Right cardiac atrium (tissue), 5 donors: ENCODE measurements at regions of chr5 and their contacts with region 1.

Region 1: DNA sequence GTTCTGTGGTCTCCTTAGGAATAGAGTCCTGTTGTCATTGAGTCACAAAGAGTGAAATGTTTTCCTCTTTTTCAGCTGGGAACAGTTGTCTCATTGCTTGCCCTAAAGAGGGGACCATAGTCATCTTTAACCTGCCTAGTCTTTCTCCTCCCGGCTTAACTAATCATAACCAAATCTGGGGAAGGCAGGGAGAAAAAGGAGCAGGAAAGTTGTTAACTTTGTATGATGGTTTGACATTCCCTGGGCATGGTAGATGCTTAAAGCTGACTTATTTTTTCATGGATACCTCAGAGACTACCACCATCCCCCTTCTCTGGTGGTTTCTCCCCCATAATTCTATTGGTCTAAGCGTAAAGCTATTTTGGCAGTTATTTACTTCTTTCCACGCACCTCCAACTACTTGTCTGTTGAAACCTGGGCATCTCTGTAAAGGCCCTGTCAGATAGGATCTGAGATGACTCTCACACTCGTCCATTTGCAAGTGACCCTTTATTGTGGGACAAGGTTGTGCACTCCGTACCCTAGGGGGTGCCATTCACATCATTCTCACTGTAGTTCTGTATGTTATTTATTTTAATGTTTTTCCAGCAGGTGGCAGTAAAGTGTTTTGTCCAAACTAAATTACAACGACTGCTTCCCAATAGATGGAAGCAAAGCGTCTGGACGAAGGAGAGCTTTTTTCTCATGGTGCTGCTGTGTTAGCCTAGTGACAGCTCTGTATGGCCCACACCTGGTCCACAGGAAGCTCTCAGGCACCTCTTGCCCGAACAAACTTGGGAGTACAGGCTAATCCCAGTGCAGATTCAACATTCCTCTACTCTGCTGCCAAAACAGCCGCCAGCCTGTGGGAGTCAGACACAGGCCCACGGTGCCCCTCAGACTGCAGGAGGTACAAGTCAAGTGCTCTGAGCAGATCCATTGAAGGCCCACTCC is 3.0 kb upstream of the FAM13B start:
- DNase-seq: peak in 2 of 3 donors; percentile 48 to 63
- ATAC-seq: peak; percentile 54
- H3K4me3 ChIP-seq: no peak overlapping the region
- H3K27ac ChIP-seq: no peak overlapping the region
- H3K4me1 ChIP-seq: no peaks in the 10 kb centered on the region
- H3K27me3 ChIP-seq: no peaks in the 10 kb centered on the region

Region 2: GRCh38 chr5:137847687-137848086 is 188.2 kb before region 1 on chr5:
- intact Hi-C with region 1: no loop called
- DNase-seq: no peak
- ATAC-seq: peak; percentile 64 to 89
- H3K4me3 ChIP-seq: no peak overlapping the region
- H3K27ac ChIP-seq: peak overlapping the region; percentile 86
- H3K4me1 ChIP-seq: peaks cover 2% of the 10 kb centered on the region
- H3K27me3 ChIP-seq: no peaks in the 10 kb centered on the region

Region 3: GRCh38 chr5:138069068-138069600 is 33.3 kb after region 1 on chr5:
- intact Hi-C with region 1: loop called in 1 of 4 experiments (anchors 2 kb)
- DNase-seq: no peak
- ATAC-seq: no peak
- H3K4me3 ChIP-seq: no peak overlapping the region
- H3K27ac ChIP-seq: no peak overlapping the region
- H3K4me1 ChIP-seq: no peaks in the 10 kb centered on the region
- H3K27me3 ChIP-seq: no peaks in the 10 kb centered on the region